CD4-positive, alpha-beta memory T cell (primary cell): ENCODE measurements at regions of chr16 and their contacts with region 1.

Region 1: GRCh38 chr16:3165111-3165822 is 22.7 kb upstream of the OR1F1 start:
- DNase-seq: no peak
- H3K4me3 ChIP-seq: peak overlapping the region in 1 of 2 donors; percentile 2
- H3K4me3 Mint-ChIP-seq: peak overlapping the region; percentile 38 to 73 (median 58)
- H3K27ac ChIP-seq: peak overlapping the region; percentile 24
- H3K27ac Mint-ChIP-seq: peak overlapping the region in 5 of 7 donors; percentile 29 to 88 (median 70)
- H3K4me1 ChIP-seq: peaks cover 8% of the 10 kb centered on the region
- H3K4me1 Mint-ChIP-seq: peaks cover 4 to 21% (median 11%) of the 10 kb centered on the region in 4 donors
- H3K27me3 ChIP-seq: no peaks in the 10 kb centered on the region
- H3K27me3 Mint-ChIP-seq: no peaks in the 10 kb centered on the region

Region 2: DNA sequence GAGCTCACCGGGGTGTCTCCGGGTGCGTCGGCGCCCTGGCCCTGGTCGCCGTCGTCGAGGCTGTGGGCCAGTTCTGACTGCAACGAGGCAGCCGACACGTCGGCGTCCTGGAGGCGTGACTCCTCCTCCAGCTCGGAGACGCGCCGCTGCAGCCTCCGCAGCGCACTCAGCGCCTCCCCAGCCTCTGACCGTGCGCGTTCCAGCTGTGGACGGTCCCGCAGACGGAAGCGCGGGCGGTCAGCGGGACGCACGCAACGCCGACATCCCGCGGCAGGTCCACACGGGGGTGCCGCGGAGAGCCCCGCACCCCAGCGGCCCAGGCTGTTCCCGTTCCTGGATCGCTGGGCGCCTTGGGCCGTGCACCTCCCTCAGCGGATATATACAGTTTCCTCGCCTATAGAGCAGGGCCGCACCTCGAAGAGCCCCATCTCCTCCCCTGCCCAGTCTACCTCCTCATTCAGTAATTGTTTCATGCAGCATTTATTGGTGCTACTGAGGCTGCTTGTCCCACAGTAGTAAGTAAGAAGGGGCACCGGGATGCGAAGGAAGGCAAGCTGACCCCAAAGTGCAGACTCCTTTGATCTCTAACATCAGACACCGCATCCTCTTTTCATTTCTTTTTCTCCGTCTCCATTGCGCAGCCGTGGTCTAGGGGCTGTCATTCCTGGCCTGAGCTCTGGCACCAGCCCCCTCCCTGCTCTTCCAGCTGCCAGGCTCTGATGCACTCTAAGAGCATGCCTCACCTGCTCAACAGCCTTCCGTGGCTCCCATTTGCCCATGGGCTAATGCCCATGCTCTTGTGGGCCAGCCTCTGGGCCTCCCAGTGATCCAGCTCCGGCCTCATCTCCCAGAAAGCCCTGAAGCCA is 135.5 kb before region 1 on chr16:
- CTCF ChIA-PET with region 1: interaction called, 25 read pairs
- POLR2A ChIA-PET with region 1: no interaction called
- intact Hi-C with region 1: loop called (anchors 1 kb)
- DNase-seq: peak in 3 of 5 donors; percentile 36 to 43 (median 37)
- H3K4me3 ChIP-seq: peak overlapping the region in 1 of 2 donors; percentile 41
- H3K4me3 Mint-ChIP-seq: peak overlapping the region; percentile 52 to 88 (median 74)
- H3K27ac ChIP-seq: no peak overlapping the region
- H3K27ac Mint-ChIP-seq: peak overlapping the region in 1 of 7 donors; percentile 81
- H3K4me1 ChIP-seq: peaks cover 25% of the 10 kb centered on the region
- H3K4me1 Mint-ChIP-seq: peaks cover 11 to 32% (median 19%) of the 10 kb centered on the region in 4 donors
- H3K27me3 ChIP-seq: peaks cover 13% of the 10 kb centered on the region
- H3K27me3 Mint-ChIP-seq: peaks cover 22 to 25% of the 10 kb centered on the region in 2 donors

Region 3: GRCh38 chr16:3094289-3095027 is 70.8 kb before region 1 on chr16:
- CTCF ChIA-PET with region 1: interaction called, 5 read pairs
- POLR2A ChIA-PET with region 1: no interaction called
- intact Hi-C with region 1: loop called (anchors 1 kb)
- DNase-seq: peak; percentile 58 to 76 (median 66)
- H3K4me3 ChIP-seq: no peak overlapping the region
- H3K4me3 Mint-ChIP-seq: peak overlapping the region in 5 of 8 donors; percentile 3 to 77 (median 22)
- H3K27ac ChIP-seq: no peak overlapping the region
- H3K27ac Mint-ChIP-seq: peak overlapping the region; percentile 17 to 95 (median 78)
- H3K4me1 ChIP-seq: peaks cover 45% of the 10 kb centered on the region
- H3K4me1 Mint-ChIP-seq: peaks cover 9 to 56% (median 32%) of the 10 kb centered on the region in 4 donors
- H3K27me3 ChIP-seq: no peaks in the 10 kb centered on the region
- H3K27me3 Mint-ChIP-seq: no peaks in the 10 kb centered on the region

Region 4: DNA sequence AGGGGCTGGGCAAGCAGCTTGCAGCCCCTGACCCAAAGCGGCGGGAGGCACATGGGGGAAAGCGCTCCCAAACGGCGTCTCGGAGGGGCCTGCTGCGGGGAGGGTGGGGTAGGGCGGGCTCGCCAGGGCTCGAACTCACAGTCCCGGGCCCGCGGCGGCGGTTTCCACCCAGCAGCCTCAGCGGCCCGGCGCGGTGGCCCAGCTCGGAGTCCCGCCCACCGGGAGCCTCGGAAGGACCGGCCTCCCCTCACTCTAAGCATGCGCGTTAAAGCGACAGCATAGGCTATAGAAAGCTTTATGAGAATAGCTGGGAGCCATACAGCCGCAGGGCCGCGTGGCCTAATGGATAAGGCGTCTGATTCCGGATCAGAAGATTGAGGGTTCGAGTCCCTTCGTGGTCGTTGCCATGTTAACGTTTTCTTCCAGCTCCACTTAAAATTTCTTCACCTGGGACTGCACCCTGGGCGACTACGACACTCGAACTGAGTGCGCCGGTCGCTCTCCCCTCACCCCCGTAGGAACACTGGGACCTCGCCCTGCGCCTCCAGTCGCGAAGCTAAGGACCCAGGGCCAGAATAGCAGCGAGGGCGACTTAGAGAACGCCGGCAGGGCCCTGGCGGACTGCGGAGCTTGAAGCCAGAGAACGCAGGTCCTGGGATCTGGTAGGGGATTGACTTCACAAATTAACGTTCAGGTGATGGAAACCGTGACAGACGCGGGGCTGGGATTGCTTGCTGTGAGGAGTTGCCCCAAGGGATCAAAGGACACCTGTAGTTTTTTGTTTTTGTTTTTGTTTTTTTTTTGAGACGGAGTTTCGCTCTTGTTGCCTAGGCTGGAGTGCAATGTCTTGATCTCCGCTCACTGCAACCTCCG is 14.7 kb before region 1 on chr16:
- CTCF ChIA-PET with region 1: interaction called, 15 read pairs
- POLR2A ChIA-PET with region 1: interaction called, 67 read pairs
- intact Hi-C with region 1: loop called (anchors 2 kb)
- DNase-seq: peak; percentile 96 to 99 (median 97)
- H3K4me3 ChIP-seq: peak overlapping the region; percentile 77 to 92
- H3K4me3 Mint-ChIP-seq: peak overlapping the region; percentile 87 to 96 (median 91)
- H3K27ac ChIP-seq: peak overlapping the region; percentile 64
- H3K27ac Mint-ChIP-seq: peak overlapping the region; percentile 87 to 100 (median 95)
- H3K4me1 ChIP-seq: peaks cover 27% of the 10 kb centered on the region
- H3K4me1 Mint-ChIP-seq: peaks cover 22 to 47% (median 26%) of the 10 kb centered on the region in 4 donors
- H3K27me3 ChIP-seq: no peaks in the 10 kb centered on the region
- H3K27me3 Mint-ChIP-seq: peaks cover 3 to 8% of the 10 kb centered on the region in 2 donors